ENCODE measurements at regions of chr17 and their contacts with region 1.

Region 1: DNA sequence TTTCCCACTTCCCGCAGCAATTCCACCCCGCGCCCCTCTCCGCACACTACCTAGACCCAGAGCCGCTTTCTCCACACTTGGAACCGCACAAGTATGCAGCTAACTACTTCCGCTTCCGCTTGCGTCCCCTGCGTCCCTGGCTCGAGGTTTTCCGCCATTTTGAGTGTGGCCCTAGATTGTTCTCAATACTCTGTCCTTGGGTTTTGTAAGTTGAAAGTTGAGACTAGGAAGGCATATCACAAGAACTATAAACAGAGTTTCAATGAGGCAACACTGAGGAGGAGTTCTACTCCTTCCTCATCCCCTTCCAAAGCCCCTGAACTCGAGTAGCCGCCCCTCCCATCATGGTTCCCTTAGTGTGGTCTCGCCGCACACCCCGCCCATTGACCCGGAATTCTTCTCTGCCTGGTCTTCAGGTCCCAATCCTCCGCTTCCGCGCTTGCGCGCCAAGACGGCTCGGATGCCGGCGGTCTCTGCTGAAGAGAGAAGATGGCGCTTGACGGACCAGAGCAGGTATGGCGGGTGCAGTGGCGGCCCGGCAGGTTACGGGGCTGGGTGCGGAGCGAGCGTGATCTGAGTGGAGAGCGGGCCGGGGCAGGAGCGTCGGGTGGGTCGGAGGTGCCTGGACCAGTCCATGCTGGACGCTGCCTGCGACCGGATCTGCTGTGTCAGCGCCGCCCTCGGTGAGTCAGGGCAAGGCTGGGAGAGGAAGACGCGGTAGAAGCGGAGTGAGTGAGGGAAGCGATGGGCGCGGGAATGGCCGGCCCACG is at the starts of genes FTSJ3 and PSMC5:
- DNase-seq: peak; percentile 95
- ATAC-seq: peak; percentile 89
- H3K4me3 ChIP-seq: peak within 1 kb of the TSS; percentile 84 to 98 (median 95)
- H3K27ac ChIP-seq: peak within 1 kb of the TSS; percentile 91
- H3K4me1 ChIP-seq: peaks cover 31% of the 10 kb centered on the region
- H3K27me3 ChIP-seq: no peaks in the 10 kb centered on the region; a peak in 1 of 5 replicates
- CTCF ChIP-seq: peak; percentile 91
- EP300 ChIP-seq: no peak
- POLR2A ChIP-seq: peak; percentile 75 to 91
- RAD21 ChIP-seq: no peak
- total RNA-seq, gene FTSJ3: 55.8 and 64.2 TPM in 2 replicates
- total RNA-seq, gene PSMC5: 35.3 and 81.4 TPM in 2 replicates

Region 2: GRCh38 chr17:63741221-63742049 is 85.8 kb before region 1 on chr17 and contains the start of gene STRADA:
- CTCF ChIA-PET with region 1: no interaction called
- POLR2A ChIA-PET with region 1: interaction called, 3 read pairs
- in situ Hi-C with region 1: no loop called
- intact Hi-C with region 1: loop called (anchors 2 kb)
- DNase-seq: peak; percentile 96
- ATAC-seq: peak; percentile 96
- H3K4me3 ChIP-seq: peak within 1 kb of the TSS; percentile 75 to 99 (median 92)
- H3K27ac ChIP-seq: peak within 1 kb of the TSS; percentile 84
- H3K4me1 ChIP-seq: peaks cover 14% of the 10 kb centered on the region
- H3K27me3 ChIP-seq: no peaks in the 10 kb centered on the region; a peak in 1 of 5 replicates
- CTCF ChIP-seq: no peak
- EP300 ChIP-seq: no peak
- POLR2A ChIP-seq: peak; percentile 78 to 90
- RAD21 ChIP-seq: peak; percentile 45
- total RNA-seq, gene STRADA: 16.1 and 17.9 TPM in 2 replicates

Region 3: DNA sequence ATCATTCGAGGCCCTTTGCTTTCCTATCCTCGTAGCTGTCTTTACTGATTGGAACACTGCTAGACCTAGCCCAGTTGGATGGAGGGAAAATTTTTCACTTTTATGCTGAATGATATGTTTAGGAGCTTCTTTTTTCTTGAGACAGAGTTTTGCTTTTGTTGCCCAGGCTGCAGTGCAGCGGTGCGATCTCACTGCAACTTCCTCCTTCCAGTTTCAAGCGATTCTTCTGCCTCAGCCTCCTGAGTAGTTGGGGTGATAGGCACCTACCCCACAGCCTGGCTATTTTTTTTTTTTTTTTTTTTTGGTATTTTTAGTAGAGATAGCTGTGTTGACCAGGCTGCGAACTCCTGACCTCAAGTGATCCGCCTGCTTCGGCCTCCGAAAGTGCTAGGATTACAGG is 17.2 kb before region 1 on chr17:
- CTCF ChIA-PET with region 1: no interaction called
- POLR2A ChIA-PET with region 1: no interaction called
- in situ Hi-C with region 1: no loop called
- intact Hi-C with region 1: no loop called
- DNase-seq: no peak
- ATAC-seq: no peak
- H3K4me3 ChIP-seq: no peak overlapping the region
- H3K27ac ChIP-seq: no peak overlapping the region
- H3K4me1 ChIP-seq: no peaks in the 10 kb centered on the region
- H3K27me3 ChIP-seq: no peaks in the 10 kb centered on the region
- CTCF ChIP-seq: no peak
- EP300 ChIP-seq: no peak
- POLR2A ChIP-seq: no peak
- RAD21 ChIP-seq: no peak

Region 4: GRCh38 chr17:63842540-63843386 is 15.6 kb after region 1 on chr17 and contains the start of gene SMARCD2:
- CTCF ChIA-PET with region 1: no interaction called
- POLR2A ChIA-PET with region 1: interaction called, 37 read pairs
- in situ Hi-C with region 1: no loop called
- intact Hi-C with region 1: loop called (anchors 1 kb)
- DNase-seq: peak; percentile 99
- ATAC-seq: peak; percentile 80
- H3K4me3 ChIP-seq: peak within 1 kb of the TSS; percentile 85 to 98 (median 97)
- H3K27ac ChIP-seq: peak within 1 kb of the TSS; percentile 92
- H3K4me1 ChIP-seq: peaks cover 44% of the 10 kb centered on the region
- H3K27me3 ChIP-seq: no peaks in the 10 kb centered on the region; a peak in 1 of 5 replicates
- CTCF ChIP-seq: peak; percentile 41
- EP300 ChIP-seq: peak; percentile 57 to 78; a peak in 3 of 4 replicates
- POLR2A ChIP-seq: peak; percentile 54 to 81
- RAD21 ChIP-seq: peak; percentile 95
- total RNA-seq, gene SMARCD2: 139 and 150 TPM in 2 replicates

Region 5: GRCh38 chr17:63859257-63859656 is 32.1 kb after region 1 on chr17:
- CTCF ChIA-PET with region 1: no interaction called
- POLR2A ChIA-PET with region 1: interaction called, 5 read pairs
- in situ Hi-C with region 1: no loop called
- intact Hi-C with region 1: loop called (anchors 1 kb)
- DNase-seq: no peak
- ATAC-seq: no peak
- H3K4me3 ChIP-seq: no peak overlapping the region
- H3K27ac ChIP-seq: no peak overlapping the region
- H3K4me1 ChIP-seq: peaks cover 23% of the 10 kb centered on the region
- H3K27me3 ChIP-seq: peaks cover 5 to 36% of the 10 kb centered on the region in 2 experiments; a peak in 3 of 5 replicates
- CTCF ChIP-seq: no peak
- EP300 ChIP-seq: no peak
- POLR2A ChIP-seq: no peak
- RAD21 ChIP-seq: no peak

Region 6: DNA sequence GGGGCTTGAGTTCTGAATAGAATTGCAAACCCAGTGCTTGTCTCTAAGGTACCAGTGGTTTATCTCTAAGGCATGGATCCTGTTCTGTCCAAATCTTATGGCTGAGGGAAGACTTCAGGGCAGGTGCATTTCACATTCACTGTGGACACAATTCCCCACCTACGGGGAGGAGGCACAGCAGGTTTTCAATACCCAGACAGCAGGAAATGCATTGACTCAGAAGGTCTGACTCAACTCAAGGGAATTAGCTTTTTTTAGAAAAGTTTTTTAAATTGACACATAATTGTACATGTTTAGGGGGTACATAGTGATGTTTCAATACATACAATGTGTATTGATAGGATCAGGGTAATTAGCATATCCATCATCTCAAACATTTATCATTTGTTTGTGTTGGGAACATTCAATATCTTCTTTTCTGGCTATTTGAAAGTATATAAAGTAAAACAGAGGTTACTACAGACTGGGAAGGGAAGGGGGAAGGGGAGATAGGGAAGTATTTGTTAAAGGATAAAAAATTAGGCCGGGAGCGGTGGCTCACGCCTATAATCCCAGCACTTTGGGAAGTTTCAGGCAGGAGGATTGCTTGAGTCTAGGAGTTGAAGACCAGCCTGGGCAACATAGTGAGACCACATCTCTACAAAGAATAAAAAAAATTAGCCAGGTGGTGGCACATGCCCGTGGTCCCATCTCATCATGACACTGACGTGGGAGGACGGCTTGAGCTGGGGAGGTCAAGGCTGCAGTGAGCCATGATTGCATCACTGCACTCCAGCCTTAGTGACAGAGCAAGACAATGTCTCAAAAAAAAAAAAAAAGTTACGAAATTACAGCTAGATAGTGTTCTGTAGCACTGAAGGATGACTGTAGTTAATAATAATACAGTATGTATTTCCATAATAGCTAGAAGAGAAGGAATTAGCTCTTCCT is 1364.9 kb after region 1 on chr17:
- CTCF ChIA-PET with region 1: no interaction called
- POLR2A ChIA-PET with region 1: no interaction called
- in situ Hi-C with region 1: no loop called
- intact Hi-C with region 1: no loop called
- DNase-seq: peak; percentile 20
- ATAC-seq: no peak
- H3K4me3 ChIP-seq: no peak overlapping the region
- H3K27ac ChIP-seq: no peak overlapping the region
- H3K4me1 ChIP-seq: no peaks in the 10 kb centered on the region
- H3K27me3 ChIP-seq: peaks cover 3 to 15% of the 10 kb centered on the region in 2 experiments; a peak in 4 of 5 replicates
- CTCF ChIP-seq: no peak
- EP300 ChIP-seq: no peak
- POLR2A ChIP-seq: no peak
- RAD21 ChIP-seq: no peak

Measured in HepG2 (cell line).